Heart left ventricle (tissue), 16 donors: ENCODE measurements at regions of chr11 and their contacts with region 1.

Region 1: GRCh38 chr11:47477323-47477722 is 28.4 kb upstream of the RAPSN start:
- DNase-seq: no peak
- ATAC-seq: peak in 1 of 4 donors; percentile 47
- H3K4me3 ChIP-seq: no peak overlapping the region
- H3K27ac ChIP-seq: no peak overlapping the region
- H3K4me1 ChIP-seq: peaks cover 0 to 26% (median 16%) of the 10 kb centered on the region in 12 donors
- H3K27me3 ChIP-seq: no peaks in the 10 kb centered on the region
- CTCF ChIP-seq: no peak
- POLR2A ChIP-seq: no peak

Region 2: GRCh38 chr11:47565340-47566148 is 88.2 kb after region 1 on chr11 and contains the start of gene PTPMT1:
- intact Hi-C with region 1: no loop called
- DNase-seq: peak; percentile 75 to 90 (median 85)
- ATAC-seq: peak; percentile 95 to 97 (median 96)
- H3K4me3 ChIP-seq: peak within 1 kb of the TSS; percentile 65 to 97 (median 90)
- H3K27ac ChIP-seq: peak within 1 kb of the TSS in 11 of 12 donors; percentile 41 to 92 (median 82)
- H3K4me1 ChIP-seq: peaks cover 0 to 23% (median 14%) of the 10 kb centered on the region in 12 donors
- H3K27me3 ChIP-seq: no peaks in the 10 kb centered on the region
- CTCF ChIP-seq: no peak
- POLR2A ChIP-seq: peak in 1 of 2 donors; percentile 51
- total RNA-seq, gene PTPMT1: 17.4 to 77.4 (median 22.7) TPM

Region 3: GRCh38 chr11:47578524-47579460 is 101.5 kb after region 1 on chr11 and contains the starts of genes KBTBD4 and NDUFS3:
- intact Hi-C with region 1: loop called in 1 of 10 experiments (anchors 5 kb)
- DNase-seq: peak; percentile 89 to 92 (median 90)
- ATAC-seq: peak; percentile 88 to 97 (median 94)
- H3K4me3 ChIP-seq: peak within 1 kb of the TSS; percentile 76 to 100 (median 96)
- H3K27ac ChIP-seq: peak within 1 kb of the TSS; percentile 67 to 95 (median 92)
- H3K4me1 ChIP-seq: peaks cover 9 to 37% (median 27%) of the 10 kb centered on the region in 12 donors
- H3K27me3 ChIP-seq: no peaks in the 10 kb centered on the region
- CTCF ChIP-seq: no peak
- POLR2A ChIP-seq: peak in 1 of 2 donors; percentile 47
- total RNA-seq, gene KBTBD4: 10.7 to 23.7 (median 15.7) TPM
- total RNA-seq, gene NDUFS3: 134 to 310 (median 236) TPM